Transverse colon (tissue), 4 donors: ENCODE measurements at regions of chrX and their contacts with region 1.

Region 1: DNA sequence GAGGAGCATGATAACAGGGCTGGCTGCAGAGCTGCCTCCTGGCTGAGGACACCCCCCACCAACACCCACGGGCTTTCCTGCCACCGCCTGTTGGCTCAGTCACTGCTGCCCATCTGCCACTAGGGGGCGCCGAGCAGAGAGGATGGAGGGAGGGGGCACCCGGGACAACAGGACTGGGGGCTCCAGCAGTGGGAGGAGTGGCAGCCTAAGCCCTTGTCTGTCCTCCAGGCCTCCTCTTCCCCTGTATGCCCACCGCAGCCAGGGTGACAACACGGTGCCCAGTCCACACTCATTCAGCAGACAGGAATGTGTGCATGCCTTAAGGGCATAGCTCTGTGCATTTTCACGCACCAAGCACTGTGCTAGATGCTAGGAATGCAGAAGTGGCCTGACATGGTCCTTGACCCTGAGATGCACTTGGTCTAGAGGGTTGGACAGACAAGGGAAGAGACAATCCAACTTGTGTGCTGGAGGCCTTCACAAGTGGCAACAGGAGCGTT is 149.9 kb downstream of the AMMECR1 start:
- DNase-seq: peak; percentile 22
- H3K4me3 ChIP-seq: no peak overlapping the region
- H3K27ac ChIP-seq: no peak overlapping the region
- H3K4me1 ChIP-seq: no peaks in the 10 kb centered on the region
- H3K27me3 ChIP-seq: no peaks in the 10 kb centered on the region
- CTCF ChIP-seq: peak; percentile 17 to 55 (median 36)
- EP300 ChIP-seq: no peak
- POLR2A ChIP-seq: no peak

Region 2: DNA sequence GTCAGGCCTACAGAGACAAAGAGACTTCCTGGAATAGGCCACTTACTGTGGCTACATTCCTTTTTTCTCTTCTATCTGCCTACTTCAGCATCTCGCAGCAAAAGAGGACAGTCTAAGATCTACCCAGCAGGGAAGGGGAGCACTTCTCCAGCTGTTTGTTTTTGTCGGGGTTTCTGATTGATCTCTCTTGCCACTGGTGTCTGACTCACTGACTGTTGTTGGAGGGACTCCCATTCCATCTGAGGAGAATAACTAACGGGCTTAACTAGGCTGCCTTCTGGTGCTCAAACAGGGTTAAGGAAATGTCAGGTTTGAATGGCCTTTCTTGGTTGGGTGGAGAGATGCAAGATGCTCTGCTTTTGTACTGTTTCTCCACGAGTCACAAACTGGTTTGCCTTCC is 265.3 kb before region 1 on chrX:
- in situ Hi-C with region 1: no loop called
- intact Hi-C with region 1: no loop called
- DNase-seq: no peak
- H3K4me3 ChIP-seq: no peak overlapping the region
- H3K27ac ChIP-seq: no peak overlapping the region
- H3K4me1 ChIP-seq: no peaks in the 10 kb centered on the region
- H3K27me3 ChIP-seq: no peaks in the 10 kb centered on the region
- CTCF ChIP-seq: no peak
- EP300 ChIP-seq: no peak
- POLR2A ChIP-seq: no peak

Region 3: DNA sequence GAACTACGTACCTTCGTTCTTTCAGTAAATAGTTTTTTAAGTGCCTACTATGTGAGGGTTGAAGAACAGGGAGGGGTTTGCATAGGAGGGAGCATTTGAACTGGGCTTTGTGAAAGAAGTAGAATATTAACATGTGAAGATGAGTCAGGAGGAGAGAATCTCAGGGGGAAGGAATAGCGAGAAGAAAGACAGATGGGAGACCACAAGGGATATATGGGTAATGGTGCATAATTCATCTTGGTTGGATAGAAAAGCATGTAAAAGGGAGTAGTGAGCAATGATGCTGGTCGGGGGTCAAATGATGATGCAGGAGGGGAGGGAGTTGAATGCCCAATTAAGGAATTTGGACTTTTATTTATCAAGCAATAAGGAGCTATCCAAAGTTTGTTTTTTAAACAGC is 112.4 kb before region 1 on chrX:
- in situ Hi-C with region 1: no loop called
- intact Hi-C with region 1: no loop called
- DNase-seq: no peak
- H3K4me3 ChIP-seq: no peak overlapping the region
- H3K27ac ChIP-seq: no peak overlapping the region
- H3K4me1 ChIP-seq: no peaks in the 10 kb centered on the region
- H3K27me3 ChIP-seq: no peaks in the 10 kb centered on the region
- CTCF ChIP-seq: no peak
- EP300 ChIP-seq: no peak
- POLR2A ChIP-seq: no peak

Region 4: DNA sequence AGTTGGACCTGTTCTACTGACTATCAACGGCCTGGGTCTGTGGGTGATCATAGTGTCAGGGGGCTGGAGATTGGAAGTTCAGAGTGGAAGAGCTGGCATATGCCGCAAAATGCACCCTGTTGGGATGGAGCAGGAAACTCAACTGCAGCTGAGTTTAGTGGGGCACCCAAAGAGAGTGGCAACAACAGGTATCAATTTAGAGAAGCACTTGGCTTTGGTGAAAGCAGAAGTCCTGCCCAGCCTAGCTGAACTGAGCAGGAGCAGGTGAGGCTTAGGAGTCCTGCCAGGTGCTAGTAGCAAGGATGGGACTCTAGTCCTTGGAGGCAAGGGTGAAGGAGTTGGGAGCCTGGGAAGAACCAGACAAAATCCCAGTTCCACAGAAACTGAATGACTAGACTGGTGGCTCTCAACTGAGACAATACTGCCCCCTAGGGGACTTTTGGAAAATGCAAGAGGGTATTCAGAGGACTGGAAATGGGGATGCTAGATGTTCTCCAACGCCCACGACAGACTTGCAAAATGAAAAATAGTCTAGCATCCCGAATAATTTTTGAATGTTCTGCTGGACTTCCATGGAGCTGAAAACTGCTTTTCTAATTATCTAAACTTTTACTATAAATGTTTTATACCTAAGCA is 240.0 kb after region 1 on chrX:
- in situ Hi-C with region 1: loop called in 2 of 4 experiments (anchors 5 to 10 kb)
- intact Hi-C with region 1: no loop called
- DNase-seq: peak; percentile 28
- H3K4me3 ChIP-seq: no peak overlapping the region
- H3K27ac ChIP-seq: no peak overlapping the region
- H3K4me1 ChIP-seq: no peaks in the 10 kb centered on the region
- H3K27me3 ChIP-seq: no peaks in the 10 kb centered on the region
- CTCF ChIP-seq: peak; percentile 58 to 67 (median 64)
- EP300 ChIP-seq: no peak
- POLR2A ChIP-seq: no peak

Region 5: GRCh38 chrX:110418316-110419235 is 250.6 kb after region 1 on chrX:
- in situ Hi-C with region 1: no loop called
- intact Hi-C with region 1: loop called (anchors 5 kb)
- DNase-seq: no peak
- H3K4me3 ChIP-seq: no peak overlapping the region
- H3K27ac ChIP-seq: peak overlapping the region in 2 of 4 donors; percentile 12 to 24
- H3K4me1 ChIP-seq: no peaks in the 10 kb centered on the region
- H3K27me3 ChIP-seq: no peaks in the 10 kb centered on the region
- CTCF ChIP-seq: peak in 2 of 5 experiments; percentile 22 to 23
- EP300 ChIP-seq: no peak
- POLR2A ChIP-seq: no peak